IMR-90 (cell line): ENCODE measurements at regions of chr5 and their contacts with region 1.

Region 1: GRCh38 chr5:74919487-74919886 is 53.3 kb upstream of the FAM169A start:
- DNase-seq: peak; percentile 70
- ATAC-seq: peak; percentile 88
- H3K4me3 ChIP-seq: no peak overlapping the region
- H3K27ac ChIP-seq: no peak overlapping the region
- H3K4me1 ChIP-seq: no peaks in the 10 kb centered on the region
- H3K27me3 ChIP-seq: no peaks in the 10 kb centered on the region
- CTCF ChIP-seq: peak; percentile 70
- POLR2A ChIP-seq: no peak
- RAD21 ChIP-seq: peak; percentile 67

Region 2: DNA sequence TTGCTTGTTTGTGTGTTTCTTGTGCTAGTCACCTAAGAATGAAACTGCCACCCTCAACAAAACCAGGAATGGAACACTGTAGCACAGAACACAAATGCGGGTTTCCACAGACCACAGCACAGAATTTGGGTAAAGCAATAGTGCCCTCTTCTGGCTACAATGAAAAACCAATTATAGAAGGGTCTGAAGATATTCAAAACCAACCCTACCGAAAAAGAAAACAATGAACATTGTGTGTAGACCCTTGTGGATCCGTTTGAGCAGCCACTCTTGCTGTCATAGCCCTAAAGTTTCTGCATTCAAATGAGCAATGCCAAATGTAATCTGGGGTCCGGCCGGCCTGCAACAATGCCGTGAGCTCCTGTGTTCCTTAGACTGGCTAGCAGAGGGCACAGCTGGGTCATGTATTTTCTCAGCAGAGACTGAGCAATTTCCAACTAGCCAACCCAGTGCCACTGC is 270.6 kb before region 1 on chr5:
- CTCF ChIA-PET with region 1: no interaction called
- POLR2A ChIA-PET with region 1: no interaction called
- dilution Hi-C with region 1: no loop called
- in situ Hi-C with region 1: no loop called
- intact Hi-C with region 1: loop called (anchors 1 kb)
- DNase-seq: peak; percentile 65
- ATAC-seq: peak; percentile 93
- H3K4me3 ChIP-seq: peak overlapping the region; percentile 48
- H3K27ac ChIP-seq: no peak overlapping the region
- H3K4me1 ChIP-seq: peaks cover 5% of the 10 kb centered on the region
- H3K27me3 ChIP-seq: no peaks in the 10 kb centered on the region
- CTCF ChIP-seq: peak; percentile 66
- POLR2A ChIP-seq: no peak
- RAD21 ChIP-seq: peak; percentile 85

Region 3: DNA sequence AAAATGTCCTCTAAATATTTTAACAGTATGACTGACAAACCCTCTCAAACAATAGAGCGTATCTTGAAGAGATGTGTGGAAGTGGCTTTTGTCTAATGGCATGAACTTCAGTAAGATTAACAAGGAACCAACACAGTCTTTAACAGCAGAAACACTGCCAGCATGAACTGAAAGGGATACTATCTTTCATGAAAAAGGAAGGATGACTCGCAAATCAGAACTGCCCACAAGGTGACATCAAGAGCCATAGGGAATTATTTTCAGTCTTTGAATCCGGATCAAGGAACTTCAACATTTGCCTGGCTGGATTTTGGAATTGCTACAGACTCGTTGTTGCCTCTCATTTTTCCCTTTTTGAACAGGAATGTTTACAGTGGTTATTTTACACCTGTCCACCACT is 239.5 kb before region 1 on chr5:
- CTCF ChIA-PET with region 1: no interaction called
- POLR2A ChIA-PET with region 1: no interaction called
- dilution Hi-C with region 1: no loop called
- in situ Hi-C with region 1: loop called (anchors 5 kb)
- intact Hi-C with region 1: no loop called
- DNase-seq: peak; percentile 70
- ATAC-seq: no peak
- H3K4me3 ChIP-seq: no peak overlapping the region
- H3K27ac ChIP-seq: no peak overlapping the region
- H3K4me1 ChIP-seq: no peaks in the 10 kb centered on the region; the same call in 1 of the 2 replicates
- H3K27me3 ChIP-seq: no peaks in the 10 kb centered on the region
- CTCF ChIP-seq: no peak
- POLR2A ChIP-seq: no peak
- RAD21 ChIP-seq: no peak

Region 4: DNA sequence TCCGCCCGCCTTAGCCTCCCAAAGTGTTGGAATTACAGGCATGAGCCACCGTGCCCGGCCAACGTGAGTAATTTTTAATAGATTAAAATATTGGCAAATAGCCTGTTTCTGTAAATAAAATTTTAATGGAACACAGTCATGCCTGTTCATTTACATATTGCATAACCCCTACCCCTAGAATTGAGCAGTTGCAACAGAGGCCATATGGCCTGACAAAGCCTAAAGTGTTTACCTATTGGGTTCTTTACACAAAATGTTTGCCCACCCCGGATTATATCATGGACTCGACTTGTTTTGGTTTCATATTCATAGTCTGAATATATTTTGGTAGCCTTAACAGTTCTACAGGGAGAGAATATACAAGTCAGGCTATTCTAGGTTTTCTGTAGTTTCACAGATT is 147.1 kb before region 1 on chr5:
- CTCF ChIA-PET with region 1: interaction called, 3 read pairs
- POLR2A ChIA-PET with region 1: no interaction called
- dilution Hi-C with region 1: no loop called
- in situ Hi-C with region 1: loop called (anchors 10 kb)
- intact Hi-C with region 1: loop called (anchors 1 kb)
- DNase-seq: peak; percentile 26
- ATAC-seq: no peak
- H3K4me3 ChIP-seq: no peak overlapping the region
- H3K27ac ChIP-seq: no peak overlapping the region
- H3K4me1 ChIP-seq: no peaks in the 10 kb centered on the region
- H3K27me3 ChIP-seq: no peaks in the 10 kb centered on the region
- CTCF ChIP-seq: no peak
- POLR2A ChIP-seq: no peak
- RAD21 ChIP-seq: no peak